Activated CD4-positive, alpha-beta T cell treated with anti-CD3 and anti-CD28 coated beads, Interleukin-2, amount 10 ng/mL, durations not matched to agents 7 days and 5 days (primary cell): ENCODE measurements at regions of chr3 and their contacts with region 1.

Region 1: DNA sequence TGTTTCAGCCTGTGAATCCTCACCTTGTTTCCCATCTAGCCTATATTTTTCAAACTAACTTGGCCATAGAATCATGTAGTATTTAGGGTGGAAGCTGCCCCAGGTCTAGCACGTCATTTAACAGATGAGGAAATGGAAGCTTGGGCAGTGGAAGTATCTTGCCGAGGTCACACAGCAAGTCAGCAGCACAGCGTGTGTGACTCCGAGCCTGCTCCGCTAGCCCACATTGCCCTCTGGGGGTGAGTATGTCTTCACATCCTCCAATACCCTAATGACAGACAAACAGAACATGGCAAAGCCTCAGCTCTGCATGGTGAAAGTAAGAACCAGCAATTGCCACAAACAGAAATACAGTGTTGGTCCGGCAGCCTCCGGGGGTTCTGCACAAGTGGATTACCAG is 2.2 kb upstream of the CCR5 start:
- DNase-seq: peak; percentile 55
- H3K4me3 Mint-ChIP-seq: no peak overlapping the region
- H3K27ac Mint-ChIP-seq: peak overlapping the region; percentile 41
- H3K4me1 Mint-ChIP-seq: peaks cover 54% of the 10 kb centered on the region
- H3K27me3 Mint-ChIP-seq: peaks cover 37% of the 10 kb centered on the region

Region 2: GRCh38 chr3:46078712-46079400 is 289.7 kb before region 1 on chr3:
- CTCF ChIA-PET with region 1: interaction called, 10 read pairs
- POLR2A ChIA-PET with region 1: no interaction called
- DNase-seq: peak; percentile 94
- H3K4me3 Mint-ChIP-seq: no peak overlapping the region
- H3K27ac Mint-ChIP-seq: no peak overlapping the region
- H3K4me1 Mint-ChIP-seq: peaks cover 23% of the 10 kb centered on the region
- H3K27me3 Mint-ChIP-seq: peaks cover 51% of the 10 kb centered on the region

Region 3: GRCh38 chr3:46208167-46208704 is 160.3 kb before region 1 on chr3 and contains the start of gene CCR1:
- CTCF ChIA-PET with region 1: interaction called, 39 read pairs
- POLR2A ChIA-PET with region 1: no interaction called
- DNase-seq: peak; percentile 54
- H3K4me3 Mint-ChIP-seq: peak within 1 kb of the TSS; percentile 63
- H3K27ac Mint-ChIP-seq: peak within 1 kb of the TSS; percentile 81
- H3K4me1 Mint-ChIP-seq: peaks cover 53% of the 10 kb centered on the region
- H3K27me3 Mint-ChIP-seq: no peaks in the 10 kb centered on the region
- total RNA-seq, gene CCR1: 6.4 to 6.6 TPM

Region 4: DNA sequence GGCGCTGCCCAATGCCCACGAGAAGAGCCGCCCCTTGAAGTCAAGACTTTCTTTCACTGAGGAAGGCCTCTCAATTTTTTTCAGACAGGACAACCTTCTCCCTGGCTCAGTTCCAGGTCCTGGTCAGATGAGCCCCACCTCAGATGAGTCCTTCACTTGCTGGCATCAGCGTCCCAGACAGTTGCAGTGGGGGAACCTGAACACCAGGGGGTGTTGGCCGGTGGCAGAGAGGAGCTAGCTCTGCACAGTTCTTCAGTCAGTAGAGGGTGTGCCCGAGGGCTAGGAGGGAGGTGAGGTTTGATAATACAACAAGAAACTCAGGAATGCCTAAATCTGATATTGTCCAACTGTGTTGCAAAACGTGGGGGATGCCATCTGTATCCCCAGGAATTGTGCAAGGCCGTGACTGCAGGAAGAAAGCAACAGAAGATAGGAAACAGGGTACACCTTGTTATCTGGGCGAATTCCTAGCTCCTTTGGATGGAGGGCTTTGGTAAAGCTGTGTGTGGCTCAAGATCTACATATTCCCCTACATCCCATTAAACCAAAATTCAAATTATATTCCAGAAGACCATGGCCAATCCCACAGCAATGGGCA is 92.0 kb before region 1 on chr3:
- CTCF ChIA-PET with region 1: interaction called, 42 read pairs
- POLR2A ChIA-PET with region 1: no interaction called
- DNase-seq: peak; percentile 78
- H3K4me3 Mint-ChIP-seq: no peak overlapping the region
- H3K27ac Mint-ChIP-seq: peak overlapping the region; percentile 3
- H3K4me1 Mint-ChIP-seq: peaks cover 49% of the 10 kb centered on the region
- H3K27me3 Mint-ChIP-seq: peaks cover 27% of the 10 kb centered on the region

Region 5: GRCh38 chr3:46303240-46303639 is 65.3 kb before region 1 on chr3:
- CTCF ChIA-PET with region 1: interaction called, 13 read pairs
- POLR2A ChIA-PET with region 1: interaction called, 7 read pairs
- DNase-seq: no peak
- H3K4me3 Mint-ChIP-seq: no peak overlapping the region
- H3K27ac Mint-ChIP-seq: no peak overlapping the region
- H3K4me1 Mint-ChIP-seq: peaks cover 46% of the 10 kb centered on the region
- H3K27me3 Mint-ChIP-seq: peaks cover 34% of the 10 kb centered on the region

Region 6: GRCh38 chr3:46356909-46357308 is 11.7 kb before region 1 on chr3:
- CTCF ChIA-PET with region 1: interaction called, 11 read pairs
- POLR2A ChIA-PET with region 1: no interaction called
- DNase-seq: no peak
- H3K4me3 Mint-ChIP-seq: peak overlapping the region; percentile 62
- H3K27ac Mint-ChIP-seq: no peak overlapping the region
- H3K4me1 Mint-ChIP-seq: peaks cover 74% of the 10 kb centered on the region
- H3K27me3 Mint-ChIP-seq: peaks cover 51% of the 10 kb centered on the region